PC-9 (cell line): ENCODE measurements at regions of chr17 and their contacts with region 1.

Region 1: GRCh38 chr17:43024407-43025289 is at the start of gene RND2:
- DNase-seq: peak; percentile 80 to 82
- H3K4me3 ChIP-seq: peak within 1 kb of the TSS; percentile 58
- H3K27ac ChIP-seq: no peak within 1 kb of the TSS
- H3K4me1 ChIP-seq: peaks cover 21% of the 10 kb centered on the region
- H3K27me3 ChIP-seq: no peaks in the 10 kb centered on the region
- CTCF ChIP-seq: peak; percentile 73
- total RNA-seq, gene RND2: 0.26 and 0.43 TPM in 2 replicates

Region 2: DNA sequence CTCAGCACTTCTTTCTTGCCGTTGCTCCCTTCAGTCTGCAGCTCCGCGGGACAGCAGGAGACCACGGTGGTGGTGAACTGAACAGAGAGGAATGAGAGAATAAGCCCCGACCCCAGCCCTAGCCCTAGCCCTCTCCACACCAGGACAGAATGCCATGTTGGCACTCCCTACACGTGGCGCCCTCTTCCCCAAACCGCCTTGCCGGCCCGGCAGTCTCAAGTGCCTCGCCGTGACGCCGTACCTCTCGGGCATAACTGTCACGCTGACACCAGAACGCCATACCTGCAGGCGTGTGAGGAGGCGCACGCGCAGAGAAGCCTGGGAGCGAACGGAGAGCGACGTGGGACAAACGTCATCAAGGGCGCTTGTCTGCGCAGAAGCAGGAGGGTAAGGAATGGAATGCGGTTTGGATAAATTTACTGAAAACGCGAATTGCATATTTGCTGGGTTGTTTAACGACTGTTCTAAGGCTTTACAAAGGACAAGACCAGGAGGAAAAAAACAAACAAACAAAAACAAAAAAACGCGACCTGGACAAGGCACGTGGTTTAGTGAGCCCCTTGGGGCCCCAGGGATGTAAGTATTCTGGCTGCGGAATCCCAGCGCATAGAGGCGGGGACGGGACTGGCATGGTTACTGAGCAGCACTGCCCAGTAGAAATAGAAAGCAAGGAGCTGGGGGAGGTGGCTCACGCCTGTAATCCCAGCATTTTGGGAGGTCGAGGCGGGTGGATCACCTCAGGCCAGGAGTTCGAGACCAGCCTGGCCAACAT is 60.3 kb before region 1 on chr17 and contains the start of gene AARSD1:
- CTCF ChIA-PET with region 1: interaction called, 14 read pairs
- POLR2A ChIA-PET with region 1: no interaction called
- intact Hi-C with region 1: no loop called
- DNase-seq: peak; percentile 87 to 93
- H3K4me3 ChIP-seq: peak within 1 kb of the TSS; percentile 96
- H3K27ac ChIP-seq: peak within 1 kb of the TSS; percentile 83
- H3K4me1 ChIP-seq: peaks cover 8% of the 10 kb centered on the region; the same call in 1 of the 2 replicates
- H3K27me3 ChIP-seq: no peaks in the 10 kb centered on the region
- CTCF ChIP-seq: no peak
- total RNA-seq, gene AARSD1: 32.6 and 35.4 TPM in 2 replicates

Region 3: DNA sequence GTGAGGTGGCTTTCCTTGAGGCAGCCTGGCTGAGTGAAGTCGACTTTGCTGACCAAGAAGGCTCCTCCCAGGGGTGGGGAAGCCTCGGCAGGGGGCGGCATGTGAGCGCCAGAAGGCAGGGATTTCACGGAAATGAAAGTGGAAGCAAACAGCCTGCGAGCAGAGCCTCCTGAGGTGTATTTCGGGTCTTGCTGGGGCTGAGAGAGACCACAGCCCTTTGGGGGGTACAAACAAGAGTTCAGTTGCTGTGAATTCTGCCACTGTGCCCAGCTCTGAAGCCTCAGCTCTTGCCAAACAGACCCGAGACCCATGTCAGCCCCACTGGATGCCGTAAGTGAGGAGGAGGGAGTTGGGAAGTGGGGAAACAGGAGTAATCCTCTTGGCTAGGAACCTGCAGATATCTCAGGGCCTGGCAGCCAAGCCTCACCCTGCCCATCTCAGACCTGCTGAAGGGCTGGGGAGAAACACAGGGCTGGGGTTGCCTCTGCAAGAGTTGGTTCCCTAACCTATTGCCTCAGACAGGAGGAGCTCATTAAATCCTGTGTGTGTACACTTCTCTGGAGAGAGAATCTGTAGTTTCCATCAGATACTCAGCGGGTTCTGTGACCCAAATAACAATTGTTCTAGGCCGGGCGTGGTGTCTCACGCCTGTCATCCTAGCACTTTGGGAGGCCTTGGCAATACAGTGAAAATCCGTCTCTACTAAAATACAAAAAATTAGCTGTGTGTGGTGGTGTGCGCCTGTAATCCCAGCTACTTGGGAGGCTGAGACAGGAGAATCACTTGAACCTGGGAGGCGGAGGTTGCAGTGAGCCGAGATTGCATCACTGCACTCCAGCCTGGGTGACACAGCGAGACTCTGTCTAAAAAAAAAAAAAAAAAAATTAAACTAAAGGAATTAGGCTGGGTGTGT is 17.8 kb before region 1 on chr17 and contains the start of gene IFI35:
- CTCF ChIA-PET with region 1: no interaction called
- POLR2A ChIA-PET with region 1: interaction called, 11 read pairs
- intact Hi-C with region 1: no loop called
- DNase-seq: peak; percentile 73 to 81
- H3K4me3 ChIP-seq: peak within 1 kb of the TSS; percentile 75
- H3K27ac ChIP-seq: peak within 1 kb of the TSS; percentile 77
- H3K4me1 ChIP-seq: peaks cover 39% of the 10 kb centered on the region
- H3K27me3 ChIP-seq: no peaks in the 10 kb centered on the region
- CTCF ChIP-seq: peak; percentile 48; the same call in 1 of the 2 replicates
- total RNA-seq, gene IFI35: 19.7 and 22.1 TPM in 2 replicates

Region 4: DNA sequence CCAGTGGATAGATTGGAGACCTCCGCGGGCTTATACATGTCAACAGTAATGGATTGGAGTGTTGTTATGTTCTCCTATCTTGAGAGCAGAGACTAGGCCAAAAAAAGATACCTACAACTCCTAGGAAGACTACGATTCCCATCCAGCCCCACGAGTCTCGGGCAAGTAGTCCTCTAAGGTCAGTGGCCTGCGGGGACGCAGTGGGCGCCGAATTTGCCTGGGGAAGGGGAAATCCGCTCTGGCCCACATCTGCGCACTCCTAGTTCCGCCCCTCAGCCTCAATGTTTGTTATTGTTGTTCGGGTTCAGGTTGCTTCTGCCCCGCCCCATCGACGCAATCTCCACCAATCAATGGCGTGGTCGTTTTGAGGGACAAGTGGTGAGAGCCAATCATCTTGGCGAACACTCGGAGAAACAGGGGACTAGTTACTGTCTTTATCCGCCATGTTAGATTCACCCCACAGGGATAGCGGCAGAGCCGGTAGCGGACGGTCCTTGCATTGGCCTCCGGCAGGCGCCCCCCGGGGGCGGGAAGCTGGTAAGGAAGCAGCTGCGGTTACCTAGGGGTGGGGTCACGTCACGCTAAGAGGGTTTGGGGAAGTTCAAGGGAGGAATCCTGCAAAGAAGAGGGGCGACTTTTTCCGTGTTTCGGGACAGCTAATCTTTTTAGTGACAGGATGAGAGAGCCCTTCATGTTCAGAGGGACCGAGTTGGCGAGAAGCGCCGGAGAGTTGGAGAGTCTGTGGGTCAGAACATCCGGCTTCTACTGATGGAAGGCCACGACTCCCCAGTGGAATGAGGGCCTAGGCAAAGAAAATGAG is 146.3 kb after region 1 on chr17 and contains the start of gene NBR1:
- CTCF ChIA-PET with region 1: no interaction called
- POLR2A ChIA-PET with region 1: interaction called, 3 read pairs
- intact Hi-C with region 1: loop called (anchors 2 kb)
- DNase-seq: peak; percentile 93
- H3K4me3 ChIP-seq: peak within 1 kb of the TSS; percentile 71
- H3K27ac ChIP-seq: peak within 1 kb of the TSS; percentile 95
- H3K4me1 ChIP-seq: peaks cover 14% of the 10 kb centered on the region
- H3K27me3 ChIP-seq: no peaks in the 10 kb centered on the region
- CTCF ChIP-seq: no peak
- total RNA-seq, gene NBR1: 80.5 and 93.7 TPM in 2 replicates

Region 5: DNA sequence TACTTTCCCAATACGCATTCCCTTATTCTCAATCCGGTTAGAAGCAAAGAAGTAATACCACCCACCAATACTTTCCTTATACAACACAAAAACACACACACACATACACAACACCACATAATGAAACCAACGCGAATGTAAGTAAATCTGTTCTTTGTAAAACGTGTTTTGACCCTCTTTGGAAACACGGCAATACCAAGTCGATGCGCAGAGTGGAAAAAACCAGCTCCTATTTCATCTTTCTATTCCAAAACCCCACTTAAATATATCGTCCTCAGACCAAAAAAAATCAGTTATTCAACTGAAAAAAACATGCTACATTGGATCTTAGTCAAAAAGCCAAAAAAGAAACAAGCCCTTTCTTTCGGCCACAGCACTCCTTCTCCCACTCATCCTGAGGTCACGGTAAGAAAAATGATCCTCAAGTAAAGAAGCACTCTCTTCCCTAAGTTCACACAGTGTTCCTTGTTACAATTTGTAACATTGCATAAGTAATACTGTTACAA is 343.1 kb after region 1 on chr17:
- CTCF ChIA-PET with region 1: no interaction called
- POLR2A ChIA-PET with region 1: interaction called, 45 read pairs
- intact Hi-C with region 1: loop called (anchors 5 kb)
- DNase-seq: peak; percentile 46 to 97
- H3K4me3 ChIP-seq: peak overlapping the region; percentile 61; the same call in 1 of the 2 replicates
- H3K27ac ChIP-seq: peak overlapping the region; percentile 100
- H3K4me1 ChIP-seq: peaks cover 42% of the 10 kb centered on the region
- H3K27me3 ChIP-seq: no peaks in the 10 kb centered on the region
- CTCF ChIP-seq: no peak